Gastrocnemius medialis (tissue), 4 donors: ENCODE measurements at regions of chr17 and their contacts with region 1.

Region 1: GRCh38 chr17:38557836-38558727 is 47.7 kb downstream of the SRCIN1 start:
- DNase-seq: peak; percentile 76 to 87
- ATAC-seq: peak; percentile 91 to 94
- H3K4me3 ChIP-seq: peak overlapping the region; percentile 46 to 69 (median 60)
- H3K27ac ChIP-seq: peak overlapping the region; percentile 3 to 46 (median 22)
- H3K4me1 ChIP-seq: peaks cover 13 to 31% of the 10 kb centered on the region in 2 donors
- H3K27me3 ChIP-seq: peaks cover 39 to 45% (median 43%) of the 10 kb centered on the region in 3 donors
- CTCF ChIP-seq: peak; percentile 79 to 96 (median 92)
- POLR2A ChIP-seq: peak in 1 of 2 donors; percentile 8

Region 2: DNA sequence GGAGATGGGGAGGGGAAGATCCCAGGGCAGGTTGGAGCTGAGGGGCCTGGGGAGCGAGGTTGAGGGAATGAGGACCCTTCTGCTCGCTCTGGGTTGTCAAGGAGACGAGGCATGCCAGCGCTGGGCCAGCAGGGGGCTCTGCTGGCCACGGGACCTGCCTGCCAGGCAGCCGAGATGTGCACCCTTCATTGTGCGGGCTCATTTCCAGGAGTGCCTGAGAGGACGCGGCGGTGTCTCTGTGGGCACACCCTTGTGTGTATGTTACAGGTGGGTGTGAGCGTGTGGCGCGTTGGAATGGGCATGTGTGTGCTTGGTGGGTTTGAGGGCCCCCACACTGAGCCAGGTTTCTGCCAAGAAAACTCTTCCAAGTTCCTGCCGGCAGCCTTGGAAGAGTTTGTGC is 113.9 kb before region 1 on chr17:
- in situ Hi-C with region 1: no loop called
- intact Hi-C with region 1: no loop called
- DNase-seq: peak; percentile 41 to 72
- ATAC-seq: peak; percentile 79 to 80
- H3K4me3 ChIP-seq: peak overlapping the region in 3 of 4 donors; percentile 5 to 14 (median 5)
- H3K27ac ChIP-seq: peak overlapping the region in 2 of 4 donors; percentile 24 to 48
- H3K4me1 ChIP-seq: peaks cover 29 to 46% of the 10 kb centered on the region in 2 donors
- H3K27me3 ChIP-seq: no peaks in the 10 kb centered on the region
- CTCF ChIP-seq: peak; percentile 84 to 95 (median 93)
- POLR2A ChIP-seq: no peak

Region 3: DNA sequence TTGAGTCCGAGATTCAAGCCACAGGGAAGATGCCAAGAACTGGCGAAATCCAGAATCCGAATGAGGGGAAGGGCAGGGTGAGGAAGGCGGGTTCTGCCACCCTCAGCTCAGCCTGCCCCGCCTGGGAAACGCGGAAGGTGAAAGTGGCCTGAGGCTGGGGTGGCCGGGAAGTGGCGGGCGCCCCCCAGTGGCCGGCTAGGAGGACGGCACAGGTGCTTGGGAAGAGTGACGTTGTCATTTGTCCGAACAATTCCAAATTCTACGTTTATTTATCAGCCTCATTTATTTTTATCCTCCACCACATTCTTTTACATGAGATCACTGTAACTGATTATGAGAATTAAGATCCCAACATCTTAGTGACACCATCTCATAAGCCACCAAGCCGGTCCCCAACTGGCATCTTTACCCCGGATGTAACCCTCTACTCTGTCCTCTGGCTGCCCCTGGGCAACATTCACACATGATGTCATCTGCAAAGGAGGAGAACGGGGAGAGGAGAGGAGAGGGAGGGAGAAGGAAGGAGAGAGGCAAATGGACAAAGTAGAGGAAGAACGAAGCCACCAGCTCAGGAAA is 26.4 kb after region 1 on chr17:
- in situ Hi-C with region 1: no loop called
- intact Hi-C with region 1: loop called (anchors 1 kb)
- DNase-seq: peak; percentile 10 to 19
- ATAC-seq: peak; percentile 66 to 72
- H3K4me3 ChIP-seq: no peak overlapping the region
- H3K27ac ChIP-seq: no peak overlapping the region
- H3K4me1 ChIP-seq: no peaks in the 10 kb centered on the region
- H3K27me3 ChIP-seq: peaks cover 9 to 19% (median 10%) of the 10 kb centered on the region in 3 donors
- CTCF ChIP-seq: peak; percentile 69 to 94 (median 87)
- POLR2A ChIP-seq: no peak

Region 4: GRCh38 chr17:38605888-38606645 is 48.0 kb after region 1 on chr17 and contains the start of gene SRCIN1:
- in situ Hi-C with region 1: no loop called
- intact Hi-C with region 1: loop called (anchors 1 kb)
- DNase-seq: no peak
- ATAC-seq: peak; percentile 31 to 47
- H3K4me3 ChIP-seq: peak within 1 kb of the TSS; percentile 53 to 63 (median 57)
- H3K27ac ChIP-seq: no peak within 1 kb of the TSS
- H3K4me1 ChIP-seq: peaks cover 0 to 10% of the 10 kb centered on the region in 2 donors
- H3K27me3 ChIP-seq: peaks cover 47 to 63% (median 54%) of the 10 kb centered on the region in 3 donors
- CTCF ChIP-seq: peak; percentile 30 to 82 (median 49)
- POLR2A ChIP-seq: no peak
- total RNA-seq, gene SRCIN1: 0.24 TPM in 1 of 4 donors, not detected in the others

Region 5: DNA sequence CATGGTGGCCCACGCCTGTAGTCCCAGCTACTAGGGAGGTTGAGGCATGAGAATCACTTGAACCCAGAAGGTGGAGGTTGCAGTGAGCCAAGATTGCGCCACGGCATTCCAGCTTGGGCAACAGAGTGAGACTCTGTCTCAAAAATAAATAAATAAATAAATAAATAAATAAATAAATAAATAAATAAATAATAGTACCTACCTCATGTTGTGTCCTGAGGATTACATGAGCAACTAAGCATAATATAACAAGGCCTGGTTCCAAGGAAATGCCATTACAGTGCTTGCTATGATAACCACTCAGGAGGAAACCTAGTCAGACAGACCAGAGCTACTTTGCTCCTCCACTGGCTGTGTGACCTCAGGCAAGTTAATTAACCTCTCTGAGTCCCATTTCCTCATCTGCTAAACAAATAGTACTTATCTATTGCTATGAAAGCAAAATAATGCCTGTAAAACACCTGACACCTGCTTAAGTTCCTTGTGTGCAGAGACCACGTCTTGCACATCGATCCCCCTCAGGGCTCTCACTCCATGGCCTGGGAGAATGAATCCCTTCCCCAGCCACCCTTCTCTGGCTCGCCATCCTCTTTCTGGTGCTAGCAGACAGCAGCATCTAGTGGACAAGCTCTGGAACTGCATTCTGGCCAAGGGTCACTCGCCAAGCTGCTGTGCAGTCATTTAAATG is 109.2 kb after region 1 on chr17:
- in situ Hi-C with region 1: loop called in 3 of 4 experiments (anchors 5 to 10 kb)
- intact Hi-C with region 1: loop called (anchors 1 kb)
- DNase-seq: peak; percentile 24 to 37
- ATAC-seq: peak; percentile 66 to 70
- H3K4me3 ChIP-seq: no peak overlapping the region
- H3K27ac ChIP-seq: no peak overlapping the region
- H3K4me1 ChIP-seq: no peaks in the 10 kb centered on the region
- H3K27me3 ChIP-seq: peaks cover 14 to 30% (median 28%) of the 10 kb centered on the region in 3 donors
- CTCF ChIP-seq: peak; percentile 83 to 98 (median 90)
- POLR2A ChIP-seq: no peak

Region 6: GRCh38 chr17:38735161-38735997 is 177.3 kb after region 1 on chr17:
- in situ Hi-C with region 1: no loop called
- intact Hi-C with region 1: loop called (anchors 2 kb)
- DNase-seq: no peak
- ATAC-seq: no peak
- H3K4me3 ChIP-seq: no peak overlapping the region
- H3K27ac ChIP-seq: peak overlapping the region in 1 of 4 donors; percentile 18
- H3K4me1 ChIP-seq: peaks cover 25 to 28% of the 10 kb centered on the region in 2 donors
- H3K27me3 ChIP-seq: no peaks in the 10 kb centered on the region
- CTCF ChIP-seq: peak; percentile 80 to 98 (median 97)
- POLR2A ChIP-seq: no peak